Kidney (tissue), 22 donors: ENCODE measurements at regions of chr6 and their contacts with region 1.

Region 1: GRCh38 chr6:16514249-16514648 is 247.0 kb downstream of the ATXN1 start:
- DNase-seq: peak in 4 of 5 donors; percentile 61 to 83 (median 74)
- H3K4me3 ChIP-seq: peak overlapping the region in 1 of 3 donors; percentile 7
- H3K27ac ChIP-seq: no peak overlapping the region
- H3K4me1 ChIP-seq: peaks cover 5 to 12% (median 12%) of the 10 kb centered on the region in 3 donors
- H3K27me3 ChIP-seq: no peaks in the 10 kb centered on the region
- CTCF ChIP-seq: peak; percentile 28

Region 2: GRCh38 chr6:16623029-16623653 is 108.9 kb after region 1 on chr6:
- intact Hi-C with region 1: no loop called
- DNase-seq: no peak
- H3K4me3 ChIP-seq: no peak overlapping the region
- H3K27ac ChIP-seq: no peak overlapping the region
- H3K4me1 ChIP-seq: no peaks in the 10 kb centered on the region
- H3K27me3 ChIP-seq: no peaks in the 10 kb centered on the region
- CTCF ChIP-seq: no peak

Region 3: DNA sequence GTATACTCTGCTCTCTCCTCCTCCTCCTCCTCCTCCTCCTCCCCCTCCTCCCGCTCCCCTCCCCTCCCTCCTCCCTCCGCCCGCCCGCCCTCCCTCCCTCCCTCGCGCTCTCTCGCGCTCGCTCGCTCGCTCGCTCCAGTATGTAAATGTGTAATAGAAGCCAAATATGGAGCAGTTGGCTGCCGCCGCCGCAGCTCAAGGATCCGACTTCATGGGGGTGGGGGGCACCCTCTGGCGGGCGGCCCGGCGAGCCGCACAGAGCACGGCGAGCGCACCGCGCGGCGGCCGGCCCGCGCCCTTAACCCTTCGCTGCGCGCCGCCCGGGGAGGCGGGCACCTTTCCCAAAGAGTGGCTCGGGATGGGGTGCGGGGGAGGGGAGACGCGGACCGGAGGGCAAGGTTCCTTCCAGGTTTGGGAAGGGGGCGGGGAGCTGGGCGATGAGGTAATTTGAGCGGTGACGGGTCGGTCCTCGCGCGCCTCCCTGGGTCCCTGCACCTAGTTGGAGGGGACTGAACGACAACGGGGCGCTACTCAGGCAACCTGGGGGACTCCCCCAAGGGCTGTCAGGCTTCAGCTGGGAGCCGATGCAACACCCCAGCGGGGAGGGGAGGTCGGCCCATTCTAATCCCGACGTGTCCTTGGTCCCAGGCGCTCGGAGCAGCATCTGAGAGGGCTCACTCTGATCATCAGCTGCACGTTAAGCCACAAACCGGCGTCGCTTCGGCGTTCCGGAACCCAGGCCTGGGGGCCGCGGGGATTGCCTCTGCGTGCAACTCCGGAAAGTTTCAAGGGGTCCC is 247.4 kb after region 1 on chr6:
- intact Hi-C with region 1: loop called (anchors 10 kb)
- DNase-seq: peak; percentile 91 to 95 (median 94)
- H3K4me3 ChIP-seq: peak overlapping the region; percentile 84 to 90 (median 89)
- H3K27ac ChIP-seq: peak overlapping the region; percentile 89 to 95
- H3K4me1 ChIP-seq: peaks cover 4 to 19% (median 6%) of the 10 kb centered on the region in 3 donors
- H3K27me3 ChIP-seq: no peaks in the 10 kb centered on the region
- CTCF ChIP-seq: peak; percentile 28